Heart right ventricle (tissue), 16 donors: ENCODE measurements at regions of chr2 and their contacts with region 1.

Region 1: DNA sequence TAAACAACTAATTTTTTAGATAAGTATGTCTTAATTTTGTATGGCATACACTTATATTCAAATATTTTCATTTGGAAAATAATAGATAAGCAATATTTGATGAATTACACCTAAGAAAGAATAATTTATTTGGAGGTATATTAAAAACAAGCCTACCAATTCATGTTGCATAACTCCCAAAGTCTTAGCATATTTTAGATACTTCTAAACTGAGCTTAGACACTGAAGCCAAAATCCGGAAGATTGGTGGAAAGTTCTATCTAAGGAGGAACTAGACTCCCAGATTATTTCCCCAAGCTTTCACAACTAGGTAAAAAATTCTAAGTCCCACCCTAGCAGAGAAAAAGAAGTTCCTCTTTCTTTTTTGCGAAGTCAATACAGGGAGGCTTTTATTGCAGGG is 221.0 kb upstream of the MMADHC start:
- DNase-seq: no peak
- ATAC-seq: no peak
- H3K4me3 ChIP-seq: no peak overlapping the region
- H3K27ac ChIP-seq: no peak overlapping the region
- H3K4me1 ChIP-seq: no peaks in the 10 kb centered on the region
- H3K27me3 ChIP-seq: no peaks in the 10 kb centered on the region
- CTCF ChIP-seq: no peak

Region 2: GRCh38 chr2:149819356-149819957 is 10.9 kb after region 1 on chr2:
- intact Hi-C with region 1: loop called in 1 of 10 experiments (anchors 1 kb)
- DNase-seq: no peak
- ATAC-seq: no peak
- H3K4me3 ChIP-seq: no peak overlapping the region
- H3K27ac ChIP-seq: no peak overlapping the region
- H3K4me1 ChIP-seq: peaks cover 0 to 6% (median 0%) of the 10 kb centered on the region in 9 donors
- H3K27me3 ChIP-seq: no peaks in the 10 kb centered on the region
- CTCF ChIP-seq: no peak

Region 3: GRCh38 chr2:150495993-150496627 is 687.6 kb after region 1 on chr2:
- intact Hi-C with region 1: loop called in 1 of 10 experiments (anchors 10 kb)
- DNase-seq: no peak
- ATAC-seq: no peak
- H3K4me3 ChIP-seq: no peak overlapping the region
- H3K27ac ChIP-seq: no peak overlapping the region
- H3K4me1 ChIP-seq: no peaks in the 10 kb centered on the region
- H3K27me3 ChIP-seq: no peaks in the 10 kb centered on the region
- CTCF ChIP-seq: no peak